Left ventricle myocardium inferior (tissue), 1 donor: ENCODE measurements at regions of chr7 and their contacts with region 1.

Region 1: DNA sequence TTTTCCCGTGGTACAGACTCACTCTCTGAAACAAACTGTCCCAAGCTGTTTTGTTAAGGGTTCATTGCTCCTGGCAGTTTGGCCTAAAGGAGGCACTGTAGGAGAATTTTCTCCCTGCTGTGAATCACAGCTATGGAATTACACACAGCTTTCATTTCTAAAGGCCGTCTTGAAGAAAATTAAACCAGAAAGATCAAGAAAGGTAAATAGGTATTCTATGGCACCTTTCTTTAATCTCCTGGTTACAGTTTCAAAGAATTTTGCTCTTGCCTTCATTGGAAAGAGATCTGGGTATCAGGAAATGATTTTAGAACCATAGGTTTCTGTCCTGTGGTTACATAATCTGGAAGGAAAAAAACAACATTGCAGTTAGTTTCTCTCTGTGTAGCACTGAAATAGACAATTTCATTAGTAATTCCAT is 51.2 kb downstream of the PDK4 start:
- DNase-seq: no peak
- H3K4me3 ChIP-seq: peak overlapping the region; percentile 60
- H3K27ac ChIP-seq: peak overlapping the region; percentile 95
- H3K4me1 ChIP-seq: peaks cover 54% of the 10 kb centered on the region
- H3K27me3 ChIP-seq: no peaks in the 10 kb centered on the region
- CTCF ChIP-seq: peak; percentile 88

Region 2: DNA sequence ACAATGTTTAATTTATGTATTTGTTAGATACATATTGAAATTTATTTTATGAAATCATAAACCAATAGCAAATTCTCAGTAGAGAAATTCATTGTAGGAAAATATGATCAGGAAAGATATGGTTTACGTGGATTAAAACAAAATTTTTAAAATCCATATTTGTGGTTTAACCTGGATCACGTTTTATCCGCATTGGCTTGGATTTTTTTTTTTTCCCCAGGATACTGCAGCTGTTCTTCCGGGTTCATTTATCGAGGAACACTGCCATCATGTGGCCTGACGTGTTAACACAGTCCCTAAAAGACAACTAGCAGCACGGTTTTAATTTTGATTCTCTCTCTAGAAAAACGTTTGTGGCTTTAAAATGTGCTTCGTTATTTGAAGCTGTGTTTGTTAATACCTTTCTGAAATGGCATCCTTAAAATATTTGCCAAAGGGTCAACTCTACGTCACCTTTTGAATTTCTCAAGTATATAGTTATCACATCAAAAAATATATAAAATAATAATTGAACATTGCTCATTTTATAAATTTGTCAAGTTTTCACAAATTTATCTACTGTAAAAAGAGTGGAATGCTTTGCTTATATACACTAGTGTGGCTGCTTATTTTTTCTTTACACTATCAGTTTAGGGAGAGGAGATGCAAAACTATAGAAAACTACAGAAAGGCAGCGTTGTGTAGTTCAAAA is 68.0 kb before region 1 on chr7:
- intact Hi-C with region 1: no loop called
- DNase-seq: peak; percentile 29
- H3K4me3 ChIP-seq: peak overlapping the region; percentile 32
- H3K27ac ChIP-seq: no peak overlapping the region
- H3K4me1 ChIP-seq: peaks cover 3% of the 10 kb centered on the region
- H3K27me3 ChIP-seq: no peaks in the 10 kb centered on the region
- CTCF ChIP-seq: peak; percentile 85

Region 3: GRCh38 chr7:95590387-95591248 is 45.5 kb after region 1 on chr7:
- intact Hi-C with region 1: loop called (anchors 5 kb)
- DNase-seq: no peak
- H3K4me3 ChIP-seq: peak overlapping the region; percentile 89
- H3K27ac ChIP-seq: peak overlapping the region; percentile 99
- H3K4me1 ChIP-seq: peaks cover 98% of the 10 kb centered on the region
- H3K27me3 ChIP-seq: no peaks in the 10 kb centered on the region
- CTCF ChIP-seq: no peak

Region 4: GRCh38 chr7:95608359-95609173 is 63.5 kb after region 1 on chr7:
- intact Hi-C with region 1: loop called (anchors 5 kb)
- DNase-seq: peak; percentile 93
- H3K4me3 ChIP-seq: peak overlapping the region; percentile 53
- H3K27ac ChIP-seq: peak overlapping the region; percentile 98
- H3K4me1 ChIP-seq: peaks cover 54% of the 10 kb centered on the region
- H3K27me3 ChIP-seq: no peaks in the 10 kb centered on the region
- CTCF ChIP-seq: no peak

Region 5: DNA sequence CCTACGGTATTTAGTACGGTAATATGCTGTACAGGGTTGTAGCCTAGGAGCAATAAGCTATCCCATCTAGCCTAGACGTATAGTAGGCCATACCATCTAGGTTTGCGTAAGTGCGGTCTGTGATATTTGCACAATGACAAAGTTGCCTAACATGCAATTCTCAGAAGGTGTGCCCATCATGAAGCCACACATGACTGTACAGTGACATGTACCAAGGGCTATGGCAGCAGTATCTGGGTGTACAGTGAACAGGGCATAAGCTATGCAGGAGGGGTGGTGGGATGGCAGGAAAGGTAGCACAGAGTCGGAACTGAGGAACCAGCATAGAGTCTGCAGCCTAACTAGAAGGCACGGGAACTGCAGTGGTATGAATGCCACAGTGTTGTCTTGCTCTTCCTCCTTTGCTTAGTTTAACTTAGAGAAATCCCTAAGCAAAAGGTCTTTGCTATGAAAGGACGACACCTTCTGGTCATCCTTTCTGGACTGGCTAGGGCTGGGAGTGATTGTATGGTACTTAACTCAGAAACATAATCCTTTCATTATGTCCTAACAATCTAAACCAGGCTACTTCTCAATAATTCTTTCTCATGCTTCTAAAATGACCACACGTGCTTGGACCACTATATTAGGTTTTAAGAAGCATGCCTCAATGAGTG is 320.8 kb after region 1 on chr7:
- intact Hi-C with region 1: no loop called
- DNase-seq: no peak
- H3K4me3 ChIP-seq: no peak overlapping the region
- H3K27ac ChIP-seq: no peak overlapping the region
- H3K4me1 ChIP-seq: no peaks in the 10 kb centered on the region
- H3K27me3 ChIP-seq: no peaks in the 10 kb centered on the region
- CTCF ChIP-seq: no peak